GM10248 (cell line): ENCODE measurements at regions of chr13 and their contacts with region 1.

Region 1: GRCh38 chr13:111066544-111066943 is 48.6 kb upstream of the ARHGEF7 start:
- DNase-seq: no peak
- CTCF ChIP-seq: no peak

Region 2: GRCh38 chr13:110698689-110699088 is 367.9 kb before region 1 on chr13:
- CTCF ChIA-PET with region 1: no interaction called
- POLR2A ChIA-PET with region 1: no interaction called
- DNase-seq: no peak
- CTCF ChIP-seq: no peak

Region 3: DNA sequence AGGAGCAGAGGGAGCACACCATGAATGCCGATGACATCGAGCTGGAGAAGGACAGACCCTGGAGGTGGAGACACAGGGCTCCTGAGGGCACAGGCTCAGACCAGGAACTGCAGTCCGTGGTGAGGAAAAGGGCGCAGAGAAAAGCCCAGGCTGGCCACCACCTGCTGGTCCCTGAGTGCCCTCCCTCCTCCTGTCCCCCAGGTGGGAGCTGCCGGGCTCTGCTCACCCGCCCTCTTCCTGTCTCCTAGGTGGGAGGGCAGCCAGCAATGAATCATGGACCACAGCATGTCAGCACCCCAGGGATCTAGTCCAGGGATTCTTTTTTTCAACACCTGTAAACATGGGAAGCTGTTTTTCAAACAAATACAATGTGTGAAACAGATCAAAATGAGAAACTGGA is 46.0 kb before region 1 on chr13:
- CTCF ChIA-PET with region 1: no interaction called
- POLR2A ChIA-PET with region 1: no interaction called
- DNase-seq: no peak
- CTCF ChIP-seq: no peak

Region 4: GRCh38 chr13:111046590-111047141 is 19.9 kb before region 1 on chr13:
- CTCF ChIA-PET with region 1: interaction called, 26 read pairs
- POLR2A ChIA-PET with region 1: no interaction called
- DNase-seq: peak; percentile 76
- CTCF ChIP-seq: peak; percentile 26

Region 5: GRCh38 chr13:111095031-111095840 is 28.7 kb after region 1 on chr13:
- CTCF ChIA-PET with region 1: interaction called, 15 read pairs
- POLR2A ChIA-PET with region 1: no interaction called
- DNase-seq: no peak
- CTCF ChIP-seq: no peak

Region 6: DNA sequence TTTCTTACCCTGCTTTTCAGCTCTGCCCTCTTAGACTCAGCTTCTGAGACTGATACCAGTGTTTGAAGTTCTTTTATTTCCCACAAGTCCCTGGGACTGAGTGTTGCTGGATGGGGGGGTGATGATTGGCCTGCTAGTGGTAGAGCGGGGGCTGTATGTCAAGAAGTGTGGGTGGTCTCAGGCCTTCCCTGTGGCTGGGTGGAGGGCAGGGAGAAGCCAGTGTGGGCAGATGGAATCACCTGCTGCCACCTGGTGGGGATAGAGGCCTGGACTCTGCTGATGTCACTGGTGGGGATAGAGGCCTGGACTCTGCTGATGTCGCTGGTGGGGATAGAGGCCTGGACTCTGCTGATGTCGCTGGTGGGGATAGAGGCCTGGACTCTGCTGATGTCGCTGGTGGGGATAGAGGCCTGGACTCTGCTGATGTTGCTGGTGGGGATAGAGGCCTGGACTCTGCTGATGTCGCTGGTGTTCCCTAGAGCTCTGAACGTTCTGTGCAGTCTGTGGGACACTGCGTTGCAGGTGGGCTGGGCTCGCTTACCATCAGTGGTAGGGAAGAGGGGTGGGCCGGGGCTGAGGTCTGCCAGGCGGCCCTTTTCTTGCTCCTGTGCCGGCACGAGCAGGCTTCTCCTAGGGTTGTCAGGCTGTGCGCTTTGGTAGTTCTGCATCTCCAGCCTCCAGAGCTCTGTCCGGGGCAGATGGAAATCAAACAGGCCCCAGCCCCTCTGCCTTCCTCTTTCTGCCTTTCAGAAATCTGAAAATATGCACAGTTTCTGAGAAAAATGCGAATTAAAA is 149.8 kb after region 1 on chr13:
- CTCF ChIA-PET with region 1: interaction called, 52 read pairs
- POLR2A ChIA-PET with region 1: no interaction called
- DNase-seq: peak; percentile 56
- CTCF ChIP-seq: peak; percentile 67

Region 7: DNA sequence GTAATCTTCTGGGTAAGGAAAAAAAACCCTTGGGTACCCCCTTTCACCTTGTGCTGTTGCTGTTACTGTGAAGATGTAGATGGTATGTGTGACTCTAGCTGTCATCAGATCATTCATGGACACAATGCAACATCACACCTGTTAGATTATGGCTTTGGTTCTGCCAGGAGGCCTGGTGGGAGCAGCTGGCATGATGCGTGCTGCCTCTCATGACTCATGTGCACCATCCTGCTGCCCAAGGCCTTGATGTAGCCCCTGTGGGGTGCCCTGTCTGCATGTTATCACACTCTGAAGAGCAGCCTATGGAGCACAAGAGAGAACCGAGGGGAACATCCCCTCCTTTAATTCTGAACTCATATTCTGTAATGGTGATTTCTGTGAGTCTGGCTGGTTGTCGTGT is 196.2 kb after region 1 on chr13:
- CTCF ChIA-PET with region 1: interaction called, 15 read pairs
- POLR2A ChIA-PET with region 1: no interaction called
- DNase-seq: no peak
- CTCF ChIP-seq: no peak

Region 8: DNA sequence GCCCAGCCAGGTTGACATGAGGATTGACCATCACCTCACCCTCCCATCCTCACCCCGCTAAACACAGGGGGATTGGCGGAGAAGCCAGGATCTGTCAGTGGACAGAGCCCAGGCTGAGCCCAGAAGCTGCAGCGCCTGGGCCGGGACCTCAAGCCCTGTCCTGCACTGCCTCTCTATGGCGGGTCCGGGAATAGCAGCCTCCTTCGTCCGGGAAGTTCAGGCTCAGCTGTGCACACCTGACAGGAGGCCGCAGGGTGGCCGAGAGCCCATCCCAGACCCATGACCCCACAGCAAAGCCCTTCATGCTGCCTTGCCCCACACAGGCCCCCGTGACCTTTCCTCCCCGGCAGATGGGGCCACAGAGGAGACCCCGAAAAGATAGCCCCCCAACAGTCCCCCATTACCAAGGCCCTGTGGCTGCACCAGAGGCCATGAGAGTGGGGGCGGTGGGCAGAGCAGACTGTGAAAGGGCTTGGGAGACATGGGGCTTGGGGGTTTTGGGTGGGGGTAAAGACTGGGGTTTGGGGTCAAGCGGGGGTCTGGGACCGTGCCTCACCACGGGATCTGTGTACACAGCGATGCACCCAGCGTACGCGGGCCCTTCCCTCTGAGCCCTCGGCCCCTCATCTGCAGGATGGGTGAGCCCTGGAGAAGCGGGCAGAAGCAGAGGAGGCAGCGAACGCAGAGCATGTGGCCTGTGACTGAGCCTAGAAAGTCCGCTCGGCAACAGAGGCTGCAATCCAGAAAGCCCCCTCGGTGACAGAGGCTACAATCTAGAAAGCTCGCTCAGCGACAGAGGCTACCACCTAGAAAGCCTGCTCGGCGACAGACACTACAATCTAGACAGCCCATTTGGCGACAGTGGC is 1377.7 kb after region 1 on chr13:
- CTCF ChIA-PET with region 1: interaction called, 18 read pairs
- POLR2A ChIA-PET with region 1: no interaction called
- DNase-seq: peak; percentile 81
- CTCF ChIP-seq: peak; percentile 89